SK-N-SH (cell line): ENCODE measurements at regions of chr12 and their contacts with region 1.

Region 1: DNA sequence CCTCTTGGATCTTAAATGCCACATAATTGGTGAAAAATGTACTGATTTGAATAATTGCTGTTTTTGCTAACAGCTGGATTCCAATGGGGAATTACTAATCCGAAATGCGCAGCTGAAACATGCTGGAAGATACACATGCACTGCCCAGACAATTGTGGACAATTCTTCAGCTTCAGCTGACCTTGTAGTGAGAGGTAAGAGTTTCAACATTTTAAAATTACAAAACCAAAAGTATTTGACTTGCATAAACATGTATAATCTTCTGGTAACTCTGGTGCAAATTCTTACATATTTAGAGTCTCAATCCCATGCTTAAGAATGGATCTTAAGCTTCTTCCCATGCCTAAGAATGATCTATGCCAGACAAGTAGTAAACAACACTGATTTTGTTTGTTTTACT is 229.1 kb upstream of the PDZRN4 start:
- DNase-seq: no peak
- H3K4me3 ChIP-seq: no peak overlapping the region
- H3K27ac ChIP-seq: no peak overlapping the region
- H3K4me1 ChIP-seq: no peaks in the 10 kb centered on the region
- H3K27me3 ChIP-seq: no peaks in the 10 kb centered on the region
- CTCF ChIP-seq: no peak
- EP300 ChIP-seq: no peak
- RAD21 ChIP-seq: no peak

Region 2: GRCh38 chr12:40829738-40830144 is 129.3 kb before region 1 on chr12:
- CTCF ChIA-PET with region 1: no interaction called
- POLR2A ChIA-PET with region 1: no interaction called
- DNase-seq: no peak
- H3K4me3 ChIP-seq: no peak overlapping the region
- H3K27ac ChIP-seq: no peak overlapping the region
- H3K4me1 ChIP-seq: peaks cover 0 to 2% of the 10 kb centered on the region in 2 experiments; a peak in 2 of 4 replicates
- H3K27me3 ChIP-seq: no peaks in the 10 kb centered on the region
- CTCF ChIP-seq: no peak
- EP300 ChIP-seq: no peak
- RAD21 ChIP-seq: no peak

Region 3: GRCh38 chr12:40870981-40871380 is 88.1 kb before region 1 on chr12:
- CTCF ChIA-PET with region 1: no interaction called
- POLR2A ChIA-PET with region 1: no interaction called
- DNase-seq: no peak
- H3K4me3 ChIP-seq: no peak overlapping the region
- H3K27ac ChIP-seq: no peak overlapping the region
- H3K4me1 ChIP-seq: no peaks in the 10 kb centered on the region
- H3K27me3 ChIP-seq: no peaks in the 10 kb centered on the region
- CTCF ChIP-seq: no peak
- EP300 ChIP-seq: no peak
- RAD21 ChIP-seq: no peak

Region 4: GRCh38 chr12:40946612-40947194 is 12.3 kb before region 1 on chr12:
- CTCF ChIA-PET with region 1: interaction called, 20 read pairs
- POLR2A ChIA-PET with region 1: no interaction called
- DNase-seq: peak; percentile 17
- H3K4me3 ChIP-seq: no peak overlapping the region; a peak in 1 of 4 replicates
- H3K27ac ChIP-seq: no peak overlapping the region
- H3K4me1 ChIP-seq: peaks cover 0 to 5% of the 10 kb centered on the region in 2 experiments; a peak in 2 of 4 replicates
- H3K27me3 ChIP-seq: no peaks in the 10 kb centered on the region
- CTCF ChIP-seq: peak; percentile 76
- EP300 ChIP-seq: no peak
- RAD21 ChIP-seq: peak; percentile 83

Region 5: DNA sequence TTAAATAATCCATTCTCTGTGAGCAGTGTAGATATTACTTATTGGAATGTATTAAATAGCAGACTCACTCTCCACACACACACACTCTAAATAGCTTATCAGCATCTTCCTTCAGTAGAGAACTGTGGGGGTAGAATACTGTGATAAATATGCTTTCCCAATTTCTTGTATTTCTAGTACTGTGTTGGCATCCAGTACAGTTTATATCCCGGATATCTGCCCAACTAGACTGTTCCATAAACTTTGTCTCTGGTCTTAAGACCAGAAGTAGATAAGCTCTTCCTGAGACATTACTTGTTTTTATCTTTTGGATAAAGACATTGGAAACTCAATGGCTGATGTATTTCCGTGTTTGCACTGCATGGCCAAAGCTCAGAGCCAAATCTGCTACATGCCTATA is 92.9 kb after region 1 on chr12:
- CTCF ChIA-PET with region 1: no interaction called
- POLR2A ChIA-PET with region 1: no interaction called
- DNase-seq: no peak
- H3K4me3 ChIP-seq: no peak overlapping the region
- H3K27ac ChIP-seq: no peak overlapping the region
- H3K4me1 ChIP-seq: no peaks in the 10 kb centered on the region
- H3K27me3 ChIP-seq: no peaks in the 10 kb centered on the region
- CTCF ChIP-seq: no peak
- EP300 ChIP-seq: no peak
- RAD21 ChIP-seq: no peak